Naive thymus-derived CD4-positive, alpha-beta T cell (primary cell): ENCODE measurements at regions of chr3 and their contacts with region 1.

Region 1: DNA sequence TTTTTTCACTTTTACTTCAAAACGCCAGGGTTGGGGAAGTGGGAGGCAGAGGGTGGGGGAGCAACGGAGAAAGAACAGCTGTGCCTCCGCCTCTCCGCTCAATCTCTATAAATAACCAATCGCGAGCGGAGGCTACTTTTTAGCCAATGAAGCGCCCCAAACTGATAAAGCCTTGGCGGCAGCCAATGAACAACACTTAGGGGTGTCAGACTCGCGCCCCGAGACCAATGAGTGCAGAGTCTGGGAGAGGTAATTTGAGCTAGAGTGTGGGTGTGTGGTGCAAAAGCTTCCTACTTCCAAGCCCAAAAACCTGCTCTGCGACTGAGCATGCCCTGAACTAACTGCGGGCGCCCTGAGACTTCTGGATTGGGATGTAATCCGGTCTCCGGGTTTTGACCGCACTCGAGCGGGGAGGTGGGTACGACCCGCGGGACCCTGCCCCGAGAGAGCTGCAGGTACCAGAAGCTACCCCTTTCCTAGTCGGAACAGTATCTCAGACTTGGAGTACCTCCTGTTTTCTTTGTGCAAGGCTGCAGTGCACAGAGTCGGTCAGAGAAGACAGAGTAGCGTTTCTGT is 800 bp upstream of the RAP2B start:
- DNase-seq: peak; percentile 66 to 95 (median 93)
- ATAC-seq: peak; percentile 85
- H3K4me3 ChIP-seq: peak overlapping the region; percentile 97
- H3K4me3 Mint-ChIP-seq: peak overlapping the region; percentile 95 to 100 (median 98)
- H3K27ac ChIP-seq: peak overlapping the region; percentile 81
- H3K27ac Mint-ChIP-seq: peak overlapping the region; percentile 89 to 98 (median 92)
- H3K4me1 ChIP-seq: peaks cover 7 to 22% of the 10 kb centered on the region in 2 donors
- H3K4me1 Mint-ChIP-seq: peaks cover 28 to 40% (median 34%) of the 10 kb centered on the region in 7 donors
- H3K27me3 ChIP-seq: no peaks in the 10 kb centered on the region
- H3K27me3 Mint-ChIP-seq: no peaks in the 10 kb centered on the region

Region 2: GRCh38 chr3:151203051-151203420 is 1958.2 kb before region 1 on chr3 and contains the start of gene GPR171:
- CTCF ChIA-PET with region 1: no interaction called
- POLR2A ChIA-PET with region 1: no interaction called
- intact Hi-C with region 1: loop called (anchors 2 to 10 kb)
- DNase-seq: peak in 8 of 9 donors; percentile 62 to 88 (median 82)
- ATAC-seq: peak; percentile 95
- H3K4me3 ChIP-seq: peak within 1 kb of the TSS; percentile 79
- H3K4me3 Mint-ChIP-seq: peak within 1 kb of the TSS; percentile 72 to 94 (median 84)
- H3K27ac ChIP-seq: peak within 1 kb of the TSS; percentile 75
- H3K27ac Mint-ChIP-seq: peak within 1 kb of the TSS; percentile 76 to 98 (median 94)
- H3K4me1 ChIP-seq: peaks cover 45 to 57% of the 10 kb centered on the region in 2 donors
- H3K4me1 Mint-ChIP-seq: peaks cover 34 to 82% (median 71%) of the 10 kb centered on the region in 7 donors
- H3K27me3 ChIP-seq: no peaks in the 10 kb centered on the region
- H3K27me3 Mint-ChIP-seq: no peaks in the 10 kb centered on the region
- total RNA-seq, gene GPR171: 16.0 to 251 (median 63.4) TPM

Region 3: DNA sequence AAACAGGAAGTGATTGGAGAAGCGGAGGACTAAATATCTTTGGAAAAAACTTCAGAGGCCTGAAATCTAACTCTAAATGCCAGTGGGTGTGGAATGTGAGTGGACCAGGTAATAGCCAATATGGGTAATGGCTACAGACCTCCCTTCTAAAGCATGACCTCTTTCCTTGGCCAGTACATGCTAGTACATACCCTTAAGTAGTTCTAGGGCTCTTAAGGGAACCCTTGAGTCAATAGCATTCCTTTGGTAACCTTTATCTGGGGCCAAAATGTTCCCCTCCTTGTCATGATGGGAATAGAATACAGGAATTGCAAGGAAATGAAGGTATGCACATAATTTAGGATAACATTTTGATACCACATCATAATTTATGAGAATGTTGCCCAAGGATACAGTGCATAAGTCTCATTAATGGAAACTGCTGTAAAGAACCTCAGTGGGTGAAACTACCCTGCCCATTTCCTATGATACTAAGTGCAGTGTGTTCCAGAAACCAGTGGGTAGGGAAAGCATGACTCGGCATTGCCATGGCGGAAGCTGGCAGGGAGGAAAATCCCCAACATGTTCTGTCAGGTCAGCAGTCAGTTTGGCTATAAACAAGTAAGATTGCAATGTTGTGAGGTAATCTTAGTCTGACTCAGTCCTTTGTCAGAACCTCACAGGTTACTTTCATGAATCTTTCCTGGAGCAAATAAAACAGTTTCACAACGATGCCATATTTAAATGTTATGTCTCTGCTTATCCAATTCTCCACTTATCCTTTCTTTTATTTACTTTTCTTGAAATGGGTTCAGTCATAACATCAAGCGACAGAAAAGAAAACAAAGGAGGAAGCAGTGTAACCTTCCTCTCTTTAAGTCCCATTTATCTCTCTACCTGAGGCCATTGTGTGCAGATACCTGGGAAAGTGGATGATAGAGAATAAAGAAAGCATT is 22.7 kb before region 1 on chr3:
- CTCF ChIA-PET with region 1: interaction called, 3 read pairs
- POLR2A ChIA-PET with region 1: interaction called, 4 read pairs
- intact Hi-C with region 1: loop called in 1 of 2 experiments (anchors 1 kb)
- DNase-seq: peak in 1 of 9 donors; percentile 64
- ATAC-seq: peak; percentile 68
- H3K4me3 ChIP-seq: no peak overlapping the region
- H3K4me3 Mint-ChIP-seq: peak overlapping the region in 1 of 10 donors; percentile 23
- H3K27ac ChIP-seq: no peak overlapping the region
- H3K27ac Mint-ChIP-seq: peak overlapping the region in 1 of 9 donors; percentile 76
- H3K4me1 ChIP-seq: peaks cover 0 to 3% of the 10 kb centered on the region in 2 donors
- H3K4me1 Mint-ChIP-seq: peaks cover 0 to 23% (median 0%) of the 10 kb centered on the region in 7 donors
- H3K27me3 ChIP-seq: no peaks in the 10 kb centered on the region
- H3K27me3 Mint-ChIP-seq: peaks cover 0 to 9% (median 4%) of the 10 kb centered on the region in 5 donors

Region 4: GRCh38 chr3:153284282-153284938 is 123.2 kb after region 1 on chr3:
- CTCF ChIA-PET with region 1: interaction called, 22 read pairs
- POLR2A ChIA-PET with region 1: interaction called, 38 read pairs
- intact Hi-C with region 1: no loop called
- DNase-seq: peak in 7 of 9 donors; percentile 7 to 53 (median 40)
- ATAC-seq: peak; percentile 85
- H3K4me3 ChIP-seq: no peak overlapping the region
- H3K4me3 Mint-ChIP-seq: peak overlapping the region; percentile 2 to 78 (median 54)
- H3K27ac ChIP-seq: peak overlapping the region; percentile 1
- H3K27ac Mint-ChIP-seq: peak overlapping the region; percentile 60 to 92 (median 74)
- H3K4me1 ChIP-seq: peaks cover 13 to 29% of the 10 kb centered on the region in 2 donors
- H3K4me1 Mint-ChIP-seq: peaks cover 25 to 48% (median 43%) of the 10 kb centered on the region in 7 donors
- H3K27me3 ChIP-seq: no peaks in the 10 kb centered on the region
- H3K27me3 Mint-ChIP-seq: no peaks in the 10 kb centered on the region

Region 5: GRCh38 chr3:153338487-153338886 is 177.3 kb after region 1 on chr3:
- CTCF ChIA-PET with region 1: no interaction called
- POLR2A ChIA-PET with region 1: no interaction called
- intact Hi-C with region 1: no loop called
- DNase-seq: no peak
- ATAC-seq: no peak
- H3K4me3 ChIP-seq: no peak overlapping the region
- H3K4me3 Mint-ChIP-seq: no peak overlapping the region
- H3K27ac ChIP-seq: no peak overlapping the region
- H3K27ac Mint-ChIP-seq: no peak overlapping the region
- H3K4me1 ChIP-seq: no peaks in the 10 kb centered on the region
- H3K4me1 Mint-ChIP-seq: peaks cover 0 to 7% (median 0%) of the 10 kb centered on the region in 7 donors
- H3K27me3 ChIP-seq: no peaks in the 10 kb centered on the region
- H3K27me3 Mint-ChIP-seq: peaks cover 0 to 5% (median 0%) of the 10 kb centered on the region in 5 donors

Region 6: DNA sequence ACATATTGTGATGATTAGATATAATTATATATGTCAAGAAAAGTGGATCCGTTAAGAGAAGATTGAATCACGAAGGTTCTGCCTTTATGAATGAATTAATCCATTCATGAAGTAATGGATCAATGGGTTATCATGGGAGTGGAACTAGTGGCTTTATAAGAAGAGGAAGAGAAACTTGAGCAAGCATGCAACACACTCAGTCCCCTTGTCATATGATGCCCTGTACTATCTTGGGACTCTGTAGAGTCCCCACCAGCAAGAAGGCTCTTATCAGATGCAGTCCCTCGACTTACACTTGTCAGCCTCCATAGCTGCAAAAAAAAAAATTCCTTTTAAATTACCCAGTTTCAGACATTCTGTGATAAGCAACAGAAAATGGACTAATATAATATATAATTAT is 302.7 kb after region 1 on chr3:
- CTCF ChIA-PET with region 1: no interaction called
- POLR2A ChIA-PET with region 1: no interaction called
- intact Hi-C with region 1: loop called in 1 of 2 experiments (anchors 2 kb)
- DNase-seq: no peak
- ATAC-seq: no peak
- H3K4me3 ChIP-seq: no peak overlapping the region
- H3K4me3 Mint-ChIP-seq: no peak overlapping the region
- H3K27ac ChIP-seq: no peak overlapping the region
- H3K27ac Mint-ChIP-seq: peak overlapping the region in 1 of 9 donors; percentile 38
- H3K4me1 ChIP-seq: peaks cover 6 to 9% of the 10 kb centered on the region in 2 donors
- H3K4me1 Mint-ChIP-seq: peaks cover 9 to 54% (median 44%) of the 10 kb centered on the region in 7 donors
- H3K27me3 ChIP-seq: no peaks in the 10 kb centered on the region
- H3K27me3 Mint-ChIP-seq: no peaks in the 10 kb centered on the region

Region 7: DNA sequence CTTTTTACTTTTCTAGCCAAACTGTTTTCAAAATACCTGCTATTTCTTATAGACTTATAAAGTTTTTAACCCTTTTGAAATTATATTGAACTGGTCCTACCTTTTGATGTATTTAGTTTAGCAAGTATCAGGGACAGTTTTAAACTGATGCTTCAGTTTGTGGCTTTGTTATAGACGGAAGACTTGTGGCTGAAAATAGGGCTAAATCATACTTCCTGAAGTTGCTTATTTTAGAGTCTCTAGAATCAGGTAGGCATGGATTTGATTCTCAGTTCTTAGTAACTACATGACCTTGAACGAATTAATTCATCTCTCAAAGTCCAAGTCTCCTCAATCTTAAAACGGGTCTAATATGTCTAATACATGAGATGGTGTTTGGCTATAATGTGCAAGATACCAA is 323.6 kb after region 1 on chr3:
- CTCF ChIA-PET with region 1: no interaction called
- POLR2A ChIA-PET with region 1: no interaction called
- intact Hi-C with region 1: no loop called
- DNase-seq: peak in 2 of 9 donors; percentile 2 to 3
- ATAC-seq: no peak
- H3K4me3 ChIP-seq: no peak overlapping the region
- H3K4me3 Mint-ChIP-seq: peak overlapping the region in 1 of 10 donors; percentile 47
- H3K27ac ChIP-seq: no peak overlapping the region
- H3K27ac Mint-ChIP-seq: peak overlapping the region in 2 of 9 donors; percentile 20 to 38
- H3K4me1 ChIP-seq: no peaks in the 10 kb centered on the region
- H3K4me1 Mint-ChIP-seq: peaks cover 0 to 16% (median 14%) of the 10 kb centered on the region in 7 donors
- H3K27me3 ChIP-seq: no peaks in the 10 kb centered on the region
- H3K27me3 Mint-ChIP-seq: no peaks in the 10 kb centered on the region

Region 8: DNA sequence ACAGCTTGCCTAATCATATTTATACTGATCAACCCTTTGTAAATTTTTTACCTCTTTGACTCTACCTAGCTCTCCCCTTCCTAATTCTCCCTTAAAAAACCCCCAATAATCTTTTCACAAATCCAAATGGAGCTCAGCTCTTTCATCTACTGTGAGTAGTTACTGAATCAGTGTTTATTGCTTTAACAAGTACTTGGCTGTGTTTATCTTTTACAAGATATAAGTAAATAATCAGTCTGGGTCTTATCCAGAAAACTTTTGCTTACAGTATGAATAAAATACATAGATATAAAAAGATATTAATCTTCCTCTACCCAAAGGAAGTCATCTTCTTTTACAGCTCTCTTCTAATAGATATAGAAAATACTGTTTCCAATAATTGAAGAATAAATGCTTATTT is 367.2 kb after region 1 on chr3:
- CTCF ChIA-PET with region 1: no interaction called
- POLR2A ChIA-PET with region 1: no interaction called
- intact Hi-C with region 1: no loop called
- DNase-seq: no peak
- ATAC-seq: no peak
- H3K4me3 ChIP-seq: no peak overlapping the region
- H3K4me3 Mint-ChIP-seq: no peak overlapping the region
- H3K27ac ChIP-seq: no peak overlapping the region
- H3K27ac Mint-ChIP-seq: no peak overlapping the region
- H3K4me1 ChIP-seq: no peaks in the 10 kb centered on the region
- H3K4me1 Mint-ChIP-seq: no peaks in the 10 kb centered on the region
- H3K27me3 ChIP-seq: no peaks in the 10 kb centered on the region
- H3K27me3 Mint-ChIP-seq: peaks cover 0 to 6% (median 0%) of the 10 kb centered on the region in 5 donors

Region 9: GRCh38 chr3:153640689-153641301 is 479.6 kb after region 1 on chr3:
- CTCF ChIA-PET with region 1: interaction called, 4 read pairs
- POLR2A ChIA-PET with region 1: interaction called, 4 read pairs
- intact Hi-C with region 1: loop called in 1 of 2 experiments (anchors 5 kb)
- DNase-seq: no peak
- ATAC-seq: no peak
- H3K4me3 ChIP-seq: no peak overlapping the region
- H3K4me3 Mint-ChIP-seq: peak overlapping the region in 1 of 10 donors; percentile 68
- H3K27ac ChIP-seq: no peak overlapping the region
- H3K27ac Mint-ChIP-seq: no peak overlapping the region
- H3K4me1 ChIP-seq: peaks cover 16 to 24% of the 10 kb centered on the region in 2 donors
- H3K4me1 Mint-ChIP-seq: peaks cover 37 to 53% (median 45%) of the 10 kb centered on the region in 7 donors
- H3K27me3 ChIP-seq: no peaks in the 10 kb centered on the region
- H3K27me3 Mint-ChIP-seq: no peaks in the 10 kb centered on the region

Region 10: DNA sequence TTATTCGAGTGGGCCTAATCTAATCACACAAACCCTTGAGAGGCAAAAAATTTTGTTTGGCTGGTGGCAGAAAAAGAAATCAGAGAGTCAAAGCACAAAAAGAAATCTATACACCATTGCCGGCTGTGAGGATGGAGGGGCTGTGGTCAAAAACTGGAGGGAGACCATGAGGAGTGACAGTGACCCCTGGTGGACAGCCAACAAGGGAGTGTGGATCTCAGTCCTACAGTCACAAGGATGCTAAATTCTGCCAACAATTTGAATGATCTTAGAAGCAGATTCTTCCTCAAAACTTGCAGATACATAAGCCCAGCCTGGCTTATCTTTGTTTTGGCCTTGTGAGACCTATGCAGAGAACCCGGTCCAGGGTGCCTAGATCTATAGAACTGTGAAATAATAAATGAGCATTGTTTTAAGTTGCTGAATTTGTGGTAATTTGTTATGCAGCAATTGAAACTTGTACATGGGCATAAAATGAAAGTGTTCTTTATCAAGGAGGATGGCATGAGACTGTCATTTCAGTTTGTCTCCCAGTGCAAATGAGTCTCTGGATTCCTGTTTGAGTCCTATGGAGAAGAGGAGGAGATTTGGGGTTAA is 857.0 kb after region 1 on chr3:
- CTCF ChIA-PET with region 1: no interaction called
- POLR2A ChIA-PET with region 1: no interaction called
- intact Hi-C with region 1: loop called (anchors 5 to 10 kb)
- DNase-seq: peak in 6 of 9 donors; percentile 4 to 21 (median 14)
- ATAC-seq: no peak
- H3K4me3 ChIP-seq: no peak overlapping the region
- H3K4me3 Mint-ChIP-seq: no peak overlapping the region
- H3K27ac ChIP-seq: no peak overlapping the region
- H3K27ac Mint-ChIP-seq: no peak overlapping the region
- H3K4me1 ChIP-seq: no peaks in the 10 kb centered on the region
- H3K4me1 Mint-ChIP-seq: no peaks in the 10 kb centered on the region
- H3K27me3 ChIP-seq: no peaks in the 10 kb centered on the region
- H3K27me3 Mint-ChIP-seq: peaks cover 0 to 13% (median 4%) of the 10 kb centered on the region in 5 donors